A549 (cell line): ENCODE measurements at regions of chr6 and their contacts with region 1.

Region 1: DNA sequence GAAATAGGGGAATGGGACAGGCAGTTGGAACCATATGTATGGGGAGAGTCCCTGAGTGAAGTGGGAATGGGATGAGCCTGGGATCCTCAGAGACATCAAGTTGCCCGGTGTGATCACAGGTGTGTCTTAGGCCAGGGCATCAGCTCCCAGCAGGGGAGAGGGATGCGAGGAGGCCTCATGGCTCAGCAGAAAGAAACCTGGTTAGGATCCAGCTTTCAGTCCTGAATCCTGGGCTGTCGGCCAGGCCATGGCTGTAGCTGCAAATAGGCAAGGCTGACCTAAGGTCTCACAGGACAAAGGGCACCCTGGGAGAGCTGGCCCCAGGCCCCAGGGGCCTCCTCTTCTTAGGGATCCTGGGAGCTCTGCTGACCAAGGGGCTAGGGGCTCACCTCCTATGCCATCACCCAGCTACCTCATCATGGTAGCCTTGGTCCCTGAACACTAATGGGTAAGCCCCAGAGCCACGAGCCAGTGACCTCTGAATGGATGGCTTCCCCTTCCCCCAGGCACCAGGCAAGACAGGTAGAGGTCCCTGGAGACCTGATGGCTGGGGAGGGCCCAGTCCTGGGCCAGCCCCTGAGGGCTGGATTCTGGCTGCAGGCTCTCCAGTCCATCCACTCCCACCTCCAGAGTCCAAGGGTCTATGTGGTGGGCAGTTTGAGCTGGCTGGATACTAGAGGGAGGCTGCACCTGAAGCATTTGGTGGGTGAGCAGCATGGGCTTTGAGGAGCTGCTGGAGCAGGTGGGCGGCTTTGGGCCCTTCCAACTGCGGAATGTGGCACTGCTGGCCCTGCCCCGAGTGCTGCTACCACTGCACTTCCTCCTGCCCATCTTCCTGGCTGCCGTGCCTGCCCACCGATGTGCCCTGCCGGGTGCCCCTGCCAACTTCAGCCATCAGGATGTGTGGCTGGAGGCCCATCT is at the start of gene SLC22A7:
- DNase-seq: no peak
- ATAC-seq: no peak
- H3K4me3 ChIP-seq: no peak within 1 kb of the TSS
- H3K27ac ChIP-seq: no peak within 1 kb of the TSS
- H3K4me1 ChIP-seq: 0 out of 3 replicates have a peak, but pooled peaks cover 3% of the 10 kb centered on the region
- CTCF ChIP-seq: no peak
- EP300 ChIP-seq: no peak
- POLR2A ChIP-seq: no peak
- RAD21 ChIP-seq: no peak
- polyA plus RNA-seq, gene SLC22A7: not detected in 2 replicates

Region 2: GRCh38 chr6:43159599-43159998 is 138.3 kb before region 1 on chr6:
- CTCF ChIA-PET with region 1: no interaction called
- POLR2A ChIA-PET with region 1: no interaction called
- DNase-seq: no peak
- ATAC-seq: no peak
- H3K4me3 ChIP-seq: no peak overlapping the region
- H3K27ac ChIP-seq: no peak overlapping the region
- H3K4me1 ChIP-seq: no peaks in the 10 kb centered on the region
- CTCF ChIP-seq: no peak
- EP300 ChIP-seq: no peak
- POLR2A ChIP-seq: no peak
- RAD21 ChIP-seq: no peak

Region 3: DNA sequence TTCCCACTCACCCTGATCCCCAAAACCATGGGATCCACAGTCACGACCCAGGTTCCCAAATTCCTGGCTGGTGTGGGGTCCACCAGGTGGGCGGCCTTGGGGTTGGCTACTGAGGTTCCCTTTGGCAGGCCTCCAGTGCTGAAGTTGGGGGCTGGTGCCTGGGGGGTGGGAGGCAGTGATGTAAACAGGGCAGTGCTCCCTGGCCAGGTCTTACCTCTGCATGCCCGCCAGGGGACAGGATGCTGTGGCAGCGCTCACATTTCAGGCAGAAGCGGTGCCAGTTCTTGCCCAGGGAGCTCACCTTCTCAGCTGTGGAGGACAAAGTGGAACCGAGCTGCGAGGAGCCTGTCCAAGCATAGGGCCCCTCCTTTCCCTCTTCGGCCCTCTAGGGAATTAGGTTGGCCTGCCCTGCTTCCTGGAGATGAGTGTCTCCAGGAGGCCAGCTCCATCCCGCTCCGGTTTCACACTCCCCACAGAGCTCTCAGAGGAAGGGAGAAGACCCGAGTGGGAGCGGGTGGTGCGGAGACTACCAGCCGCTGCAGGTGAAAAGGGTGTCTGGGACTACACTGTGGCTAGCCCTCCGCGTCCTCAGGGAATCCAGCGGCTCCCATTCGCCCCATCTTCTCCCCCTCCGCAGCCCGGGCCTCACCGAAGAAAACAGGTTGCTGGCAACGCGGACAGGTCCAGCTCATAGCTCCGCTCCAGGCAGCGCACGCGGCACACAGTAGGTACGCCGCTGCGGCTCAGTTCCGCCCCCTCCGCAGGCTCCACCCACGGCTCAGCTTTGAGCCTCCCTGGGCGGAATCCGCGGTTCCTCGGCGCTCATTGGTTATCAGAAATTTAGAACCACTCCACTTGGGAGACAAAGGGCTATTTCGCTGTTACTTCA is 10.4 kb after region 1 on chr6 and contains the start of gene CRIP3:
- CTCF ChIA-PET with region 1: interaction called, 18 read pairs
- POLR2A ChIA-PET with region 1: no interaction called
- DNase-seq: peak; percentile 15 to 54
- ATAC-seq: peak; percentile 83 to 92
- H3K4me3 ChIP-seq: peak within 1 kb of the TSS; percentile 63
- H3K27ac ChIP-seq: peak within 1 kb of the TSS; percentile 50 to 55
- H3K4me1 ChIP-seq: peaks cover 12% of the 10 kb centered on the region
- CTCF ChIP-seq: peak; percentile 23; the same call in 1 of the 3 replicates
- EP300 ChIP-seq: no peak
- POLR2A ChIP-seq: no peak
- RAD21 ChIP-seq: 0 out of 5 replicates have a peak, but pooled peaks of 1 of the 2 experiments have one; percentile 21
- polyA plus RNA-seq, gene CRIP3: 1.3 and 2.6 TPM in 2 replicates

Region 4: GRCh38 chr6:43746613-43747102 is 448.8 kb after region 1 on chr6:
- CTCF ChIA-PET with region 1: no interaction called
- POLR2A ChIA-PET with region 1: no interaction called
- DNase-seq: no peak
- ATAC-seq: no peak
- H3K4me3 ChIP-seq: no peak overlapping the region
- H3K27ac ChIP-seq: no peak overlapping the region; a peak in 1 of 6 replicates
- H3K4me1 ChIP-seq: peaks cover 9% of the 10 kb centered on the region; the same call in 2 of the 3 replicates
- CTCF ChIP-seq: no peak
- EP300 ChIP-seq: no peak
- POLR2A ChIP-seq: no peak
- RAD21 ChIP-seq: no peak